ENCODE measurements at regions of chr13 and their contacts with region 1.

Region 1: GRCh38 chr13:40221460-40222201 is 444.8 kb downstream of the FOXO1 start:
- DNase-seq: peak; percentile 62
- ATAC-seq: peak; percentile 63
- H3K4me3 Mint-ChIP-seq: peak overlapping the region; percentile 45
- H3K27ac Mint-ChIP-seq: peak overlapping the region; percentile 91
- H3K4me1 Mint-ChIP-seq: peaks cover 61% of the 10 kb centered on the region
- H3K27me3 Mint-ChIP-seq: no peaks in the 10 kb centered on the region

Region 2: DNA sequence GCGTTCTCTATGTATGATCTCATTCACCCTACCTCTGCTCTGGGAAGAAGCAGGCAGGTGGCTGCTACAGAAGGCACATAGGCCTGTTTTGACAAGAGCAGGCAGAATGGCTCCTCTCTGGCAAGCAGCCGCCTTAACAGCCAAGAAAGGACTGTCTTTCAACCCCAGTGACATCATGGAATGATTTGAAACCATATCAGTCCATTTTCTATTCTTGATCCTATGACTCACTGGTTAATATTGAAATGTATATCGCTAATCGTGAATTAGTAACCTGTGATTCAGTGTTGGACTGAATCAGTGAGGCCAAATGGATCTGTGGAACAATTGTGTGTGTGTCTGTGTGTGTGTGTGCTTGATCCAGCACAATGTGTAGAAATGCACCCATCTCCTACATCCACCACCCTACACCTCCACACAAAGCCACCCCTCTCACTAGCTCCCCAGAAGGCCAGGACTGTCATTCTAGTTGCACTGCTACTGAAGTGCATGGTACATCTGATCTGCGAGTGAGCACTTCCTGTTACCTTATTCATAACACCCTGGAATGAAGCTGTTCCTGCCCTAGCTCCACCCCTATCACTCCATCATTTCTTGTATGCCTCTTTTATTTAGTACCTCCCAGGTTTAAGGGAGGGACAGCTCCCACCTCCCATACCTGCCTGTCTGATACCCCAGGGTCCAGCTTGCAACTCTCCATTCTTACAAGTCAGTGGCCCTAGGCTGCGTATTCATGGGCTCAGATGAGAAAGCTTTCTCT is 15.2 kb before region 1 on chr13:
- CTCF ChIA-PET with region 1: interaction called, 4 read pairs
- POLR2A ChIA-PET with region 1: interaction called, 3 read pairs
- intact Hi-C with region 1: loop called in 1 of 2 experiments (anchors 2 kb)
- DNase-seq: peak; percentile 68
- ATAC-seq: peak; percentile 89
- H3K4me3 Mint-ChIP-seq: peak overlapping the region; percentile 58
- H3K27ac Mint-ChIP-seq: peak overlapping the region; percentile 99
- H3K4me1 Mint-ChIP-seq: peaks cover 64% of the 10 kb centered on the region
- H3K27me3 Mint-ChIP-seq: no peaks in the 10 kb centered on the region

Measured in activated CD4-positive, alpha-beta T cell treated with anti-CD3 and anti-CD28 coated beads for 36 hours (primary cell).